ENCODE measurements at regions of chr19 and their contacts with region 1.

Region 1: GRCh38 chr19:2064788-2065524 is 13.9 kb upstream of the MKNK2 start:
- DNase-seq: peak; percentile 72 to 93 (median 80)
- H3K4me3 ChIP-seq: no peak overlapping the region
- H3K27ac ChIP-seq: peak overlapping the region; percentile 88 to 100 (median 96)
- H3K4me1 ChIP-seq: peaks cover 43 to 50% of the 10 kb centered on the region in 2 donors
- H3K27me3 ChIP-seq: no peaks in the 10 kb centered on the region
- CTCF ChIP-seq: peak in 5 of 6 experiments; percentile 18 to 53 (median 45)
- POLR2A ChIP-seq: peak in 1 of 2 donors; percentile 77

Region 2: GRCh38 chr19:1970003-1970805 is 94.8 kb before region 1 on chr19:
- intact Hi-C with region 1: no loop called
- DNase-seq: peak in 1 of 7 donors; percentile 36
- H3K4me3 ChIP-seq: no peak overlapping the region
- H3K27ac ChIP-seq: peak overlapping the region in 2 of 5 donors; percentile 29 to 34
- H3K4me1 ChIP-seq: peaks cover 0 to 5% of the 10 kb centered on the region in 2 donors
- H3K27me3 ChIP-seq: no peaks in the 10 kb centered on the region
- CTCF ChIP-seq: no peak
- POLR2A ChIP-seq: no peak

Region 3: DNA sequence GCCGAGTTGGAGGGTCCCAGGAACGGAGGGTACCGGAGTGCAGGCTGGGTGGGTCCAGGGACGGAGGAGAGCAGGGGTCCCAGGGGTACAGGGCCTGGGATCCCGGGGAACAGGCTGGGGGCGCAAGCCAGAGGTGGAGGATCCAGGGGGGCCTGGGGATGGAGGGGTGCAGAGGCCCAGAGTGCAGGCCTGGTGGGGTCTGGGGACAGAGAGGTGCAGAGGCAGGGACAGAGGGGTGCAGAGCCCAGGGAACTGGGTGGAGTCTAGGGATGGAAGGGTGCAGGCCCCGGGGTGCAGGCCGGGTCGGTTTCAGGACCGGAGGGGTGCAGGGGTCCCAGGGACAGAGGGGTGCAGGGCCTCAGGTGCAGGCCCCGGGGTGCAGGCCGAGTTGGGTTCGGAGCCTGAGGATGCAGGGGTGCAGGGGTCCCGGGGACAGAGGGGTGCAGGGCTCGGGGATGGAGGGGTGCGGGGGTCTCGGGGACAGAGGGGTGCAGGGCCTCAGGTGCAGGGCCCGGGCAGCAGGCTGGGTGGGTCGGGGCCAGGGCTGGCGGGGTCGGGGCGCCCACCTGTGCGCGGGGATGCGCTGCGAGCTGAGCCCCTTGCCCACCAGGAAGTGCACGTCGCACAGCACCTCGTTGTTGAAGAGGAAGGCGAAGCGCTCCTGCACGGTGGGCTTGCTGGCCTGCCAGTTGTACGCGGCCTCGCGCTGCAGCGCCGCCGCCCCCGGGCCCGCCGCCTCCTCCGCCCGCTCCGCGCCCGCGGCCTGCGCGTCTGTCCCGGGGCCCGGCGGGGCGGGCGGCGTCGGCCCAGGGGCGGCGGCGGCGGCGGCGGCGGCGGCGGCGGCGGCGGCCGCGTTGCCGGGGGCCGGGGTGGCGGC is 50.0 kb before region 1 on chr19:
- intact Hi-C with region 1: loop called (anchors 2 to 5 kb)
- DNase-seq: peak in 2 of 7 donors; percentile 50 to 55
- H3K4me3 ChIP-seq: peak overlapping the region in 3 of 4 donors; percentile 22 to 77 (median 49)
- H3K27ac ChIP-seq: peak overlapping the region in 2 of 5 donors; percentile 57 to 66
- H3K4me1 ChIP-seq: peaks cover 7 to 13% of the 10 kb centered on the region in 2 donors
- H3K27me3 ChIP-seq: no peaks in the 10 kb centered on the region
- CTCF ChIP-seq: no peak
- POLR2A ChIP-seq: no peak